AG04450 (cell line): ENCODE measurements at regions of chr10 and their contacts with region 1.

Region 1: GRCh38 chr10:72126184-72126871 is 38.0 kb upstream of the SPOCK2 start:
- DNase-seq: peak; percentile 10
- H3K4me3 ChIP-seq: no peak overlapping the region
- H3K27ac ChIP-seq: no peak overlapping the region
- H3K27me3 ChIP-seq: no peaks in the 10 kb centered on the region
- CTCF ChIP-seq: peak; percentile 59

Region 2: GRCh38 chr10:72114706-72115450 is 11.4 kb before region 1 on chr10:
- CTCF ChIA-PET with region 1: interaction called, 11 read pairs
- POLR2A ChIA-PET with region 1: interaction called, 3 read pairs
- DNase-seq: no peak
- H3K4me3 ChIP-seq: no peak overlapping the region
- H3K27ac ChIP-seq: no peak overlapping the region
- H3K27me3 ChIP-seq: no peaks in the 10 kb centered on the region
- CTCF ChIP-seq: no peak

Region 3: GRCh38 chr10:72223743-72224101 is 97.4 kb after region 1 on chr10:
- CTCF ChIA-PET with region 1: interaction called, 50 read pairs
- POLR2A ChIA-PET with region 1: no interaction called
- DNase-seq: no peak
- H3K4me3 ChIP-seq: no peak overlapping the region
- H3K27ac ChIP-seq: no peak overlapping the region
- H3K27me3 ChIP-seq: no peaks in the 10 kb centered on the region
- CTCF ChIP-seq: no peak

Region 4: DNA sequence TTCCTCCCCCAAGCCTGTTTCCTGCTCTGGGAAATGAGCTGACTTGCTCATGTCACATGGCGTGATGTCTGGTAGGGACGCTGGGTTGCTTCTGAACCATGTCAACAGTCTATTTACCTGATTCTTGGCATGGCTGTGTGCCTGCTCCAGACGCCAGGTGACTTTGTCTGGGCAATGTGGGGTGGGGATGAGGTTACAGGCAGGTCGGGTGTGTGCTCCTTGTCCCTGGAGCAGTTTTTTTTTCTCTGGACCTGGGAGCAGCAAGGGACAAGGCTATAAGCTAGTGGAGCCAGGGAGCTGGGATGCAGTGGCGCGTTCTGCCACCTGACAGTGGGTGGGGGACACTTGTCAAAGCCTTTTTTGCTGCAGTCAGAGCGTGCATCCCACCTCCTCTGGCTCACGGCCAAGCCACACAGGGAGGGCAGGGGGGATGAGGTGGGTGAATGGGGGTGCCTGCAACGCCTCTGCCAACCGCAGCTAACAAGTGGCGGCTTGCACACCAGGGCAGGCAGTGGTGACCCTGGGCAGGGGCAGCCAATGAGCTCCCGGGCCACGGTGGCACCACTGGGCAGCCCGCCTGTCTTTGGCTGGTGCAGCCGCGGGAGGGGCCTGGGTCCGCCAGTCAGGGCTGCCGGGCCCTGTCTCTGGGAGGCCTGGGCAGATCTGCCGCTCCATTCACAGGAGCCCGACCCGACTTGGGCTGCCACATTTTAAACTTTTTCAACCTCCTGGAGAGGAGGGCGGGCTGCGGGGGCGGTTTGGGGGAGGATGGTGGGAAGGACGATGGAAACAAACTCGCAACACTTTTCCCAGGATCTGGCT is 205.5 kb after region 1 on chr10:
- CTCF ChIA-PET with region 1: interaction called, 31 read pairs
- POLR2A ChIA-PET with region 1: no interaction called
- DNase-seq: no peak
- H3K4me3 ChIP-seq: no peak overlapping the region
- H3K27ac ChIP-seq: no peak overlapping the region
- H3K27me3 ChIP-seq: no peaks in the 10 kb centered on the region
- CTCF ChIP-seq: no peak